ENCODE measurements at regions of chr12 and their contacts with region 1.

Region 1: GRCh38 chr12:109033234-109034196 is 12.6 kb upstream of the SVOP start:
- DNase-seq: peak in 1 of 2 donors; percentile 3
- H3K4me3 ChIP-seq: no peak overlapping the region
- H3K27ac ChIP-seq: no peak overlapping the region
- H3K4me1 ChIP-seq: no peaks in the 10 kb centered on the region
- H3K27me3 ChIP-seq: no peaks in the 10 kb centered on the region
- CTCF ChIP-seq: no peak
- POLR2A ChIP-seq: no peak

Region 2: DNA sequence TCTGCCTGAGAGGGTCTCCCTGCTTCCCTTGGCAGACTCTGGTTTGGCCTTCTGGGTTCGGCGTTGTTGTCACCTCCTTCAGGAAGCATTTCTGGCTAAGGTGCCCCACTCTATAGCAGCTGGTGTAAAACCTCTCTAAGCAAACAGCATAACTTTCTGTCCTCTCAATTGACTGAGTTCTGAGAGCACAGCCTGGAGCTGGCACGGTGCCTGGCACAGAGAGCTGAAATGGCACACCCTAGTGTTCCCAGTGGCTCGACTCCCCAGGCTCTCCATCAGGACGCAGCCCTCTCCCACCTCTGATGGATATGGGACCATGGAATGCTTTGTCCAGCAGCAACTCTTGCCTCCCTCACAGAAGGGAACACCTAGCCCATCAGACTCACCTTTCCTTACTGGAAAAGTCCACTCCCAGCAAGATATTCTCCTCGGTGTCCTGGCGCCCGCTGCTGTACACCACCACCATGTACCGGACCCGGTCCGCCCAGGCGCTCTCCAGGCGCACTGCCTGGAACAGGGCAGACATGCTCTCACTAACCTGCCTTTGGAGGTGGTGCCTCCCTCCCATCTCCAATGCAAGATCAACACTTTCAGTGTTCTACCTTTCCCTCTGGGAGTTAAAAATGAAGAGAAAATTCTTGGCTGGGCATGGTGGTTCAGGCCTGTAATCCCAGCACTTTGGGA is 216.7 kb before region 1 on chr12:
- intact Hi-C with region 1: no loop called
- DNase-seq: no peak
- H3K4me3 ChIP-seq: no peak overlapping the region
- H3K27ac ChIP-seq: peak overlapping the region; percentile 45
- H3K4me1 ChIP-seq: peaks cover 33% of the 10 kb centered on the region
- H3K27me3 ChIP-seq: no peaks in the 10 kb centered on the region
- CTCF ChIP-seq: no peak
- POLR2A ChIP-seq: no peak

Region 3: GRCh38 chr12:108933949-108934348 is 99.6 kb before region 1 on chr12:
- intact Hi-C with region 1: loop called (anchors 2 kb)
- DNase-seq: no peak
- H3K4me3 ChIP-seq: no peak overlapping the region
- H3K27ac ChIP-seq: no peak overlapping the region
- H3K4me1 ChIP-seq: no peaks in the 10 kb centered on the region
- H3K27me3 ChIP-seq: no peaks in the 10 kb centered on the region
- CTCF ChIP-seq: no peak
- POLR2A ChIP-seq: no peak